ENCODE measurements at regions of chr6 and their contacts with region 1.

Region 1: GRCh38 chr6:3176562-3177355 is 19.4 kb upstream of the TUBB2A start:
- DNase-seq: no peak
- H3K4me3 ChIP-seq: no peak overlapping the region
- H3K27ac ChIP-seq: no peak overlapping the region
- H3K4me1 ChIP-seq: no peaks in the 10 kb centered on the region
- H3K27me3 ChIP-seq: no peaks in the 10 kb centered on the region
- CTCF ChIP-seq: no peak
- EP300 ChIP-seq: no peak
- POLR2A ChIP-seq: no peak

Region 2: GRCh38 chr6:3125815-3126214 is 50.9 kb before region 1 on chr6:
- intact Hi-C with region 1: no loop called
- DNase-seq: no peak
- H3K4me3 ChIP-seq: no peak overlapping the region
- H3K27ac ChIP-seq: no peak overlapping the region
- H3K4me1 ChIP-seq: no peaks in the 10 kb centered on the region
- H3K27me3 ChIP-seq: no peaks in the 10 kb centered on the region
- CTCF ChIP-seq: no peak
- EP300 ChIP-seq: no peak
- POLR2A ChIP-seq: no peak

Region 3: DNA sequence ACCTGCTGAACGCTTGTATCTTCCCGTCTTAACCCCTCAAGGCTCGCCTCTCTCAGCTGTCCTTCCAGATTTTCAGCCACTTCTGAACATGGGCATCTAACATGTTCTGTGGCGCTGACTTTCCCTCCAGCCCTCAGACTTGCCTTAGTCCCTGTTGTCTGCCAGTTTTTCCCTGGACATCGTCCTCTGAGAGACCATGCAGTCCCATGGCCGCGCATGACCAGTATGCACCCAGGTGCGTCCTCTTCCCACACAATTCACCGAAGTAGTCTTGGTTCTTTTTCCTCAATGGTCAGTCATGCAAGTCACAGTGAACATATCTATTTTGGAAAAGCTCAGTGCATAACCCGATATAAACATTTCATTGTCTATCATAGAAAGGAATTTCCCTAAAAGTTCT is 41.5 kb after region 1 on chr6:
- intact Hi-C with region 1: loop called (anchors 2 kb)
- DNase-seq: no peak
- H3K4me3 ChIP-seq: no peak overlapping the region
- H3K27ac ChIP-seq: no peak overlapping the region
- H3K4me1 ChIP-seq: no peaks in the 10 kb centered on the region
- H3K27me3 ChIP-seq: no peaks in the 10 kb centered on the region
- CTCF ChIP-seq: no peak
- EP300 ChIP-seq: no peak
- POLR2A ChIP-seq: no peak

Measured in sigmoid colon (tissue), 7 donors.